ENCODE measurements at regions of chr10 and their contacts with region 1.

Region 1: GRCh38 chr10:24952707-24953645 is 570 bp upstream of the PRTFDC1 start:
- DNase-seq: peak; percentile 59 to 60
- H3K4me3 ChIP-seq: peak overlapping the region; percentile 52 to 66
- H3K27ac ChIP-seq: peak overlapping the region; percentile 92 to 95
- H3K4me1 ChIP-seq: no peaks in the 10 kb centered on the region
- H3K27me3 ChIP-seq: no peaks in the 10 kb centered on the region
- CTCF ChIP-seq: peak in 1 of 4 experiments; percentile 41
- POLR2A ChIP-seq: peak in 1 of 2 donors; percentile 19

Region 2: DNA sequence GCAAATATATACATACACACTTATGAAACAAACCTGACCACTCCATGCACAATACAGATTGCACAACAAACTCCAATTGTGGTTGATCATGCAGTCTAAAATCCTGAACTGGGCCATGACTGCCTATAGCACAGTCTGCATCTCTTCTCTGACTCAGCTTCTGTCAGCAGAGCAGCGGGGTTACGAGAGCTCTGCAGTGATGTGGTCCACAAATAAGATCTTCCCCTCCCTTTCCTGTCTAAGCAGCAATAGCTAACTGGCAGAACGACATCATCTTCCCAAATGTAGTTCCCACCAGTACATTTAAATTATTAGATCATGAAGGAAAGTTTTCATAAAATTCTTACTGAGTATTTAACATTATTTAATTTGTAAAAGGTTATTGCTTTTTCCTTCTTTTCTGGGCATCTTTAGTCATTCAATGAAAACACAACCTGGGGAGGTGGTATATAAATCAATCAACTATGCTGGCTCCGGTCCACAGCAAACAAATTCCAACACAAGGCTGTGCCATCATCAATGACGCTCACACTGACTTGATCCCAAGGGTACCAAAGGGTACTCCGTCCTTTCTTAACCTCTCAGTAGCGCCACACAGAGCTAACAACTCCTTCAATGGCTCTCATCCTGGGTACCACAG is 246.4 kb before region 1 on chr10:
- intact Hi-C with region 1: no loop called
- DNase-seq: peak in 1 of 2 donors; percentile 33
- H3K4me3 ChIP-seq: no peak overlapping the region
- H3K27ac ChIP-seq: peak overlapping the region in 1 of 2 donors; percentile 8
- H3K4me1 ChIP-seq: peaks cover 0 to 7% of the 10 kb centered on the region in 2 donors
- H3K27me3 ChIP-seq: no peaks in the 10 kb centered on the region
- CTCF ChIP-seq: no peak
- POLR2A ChIP-seq: no peak

Region 3: GRCh38 chr10:24724381-24725228 is 228.4 kb before region 1 on chr10:
- intact Hi-C with region 1: loop called (anchors 10 kb)
- DNase-seq: peak; percentile 97 to 98
- H3K4me3 ChIP-seq: peak overlapping the region; percentile 56 to 62
- H3K27ac ChIP-seq: peak overlapping the region; percentile 97 to 98
- H3K4me1 ChIP-seq: no peaks in the 10 kb centered on the region
- H3K27me3 ChIP-seq: no peaks in the 10 kb centered on the region
- CTCF ChIP-seq: no peak
- POLR2A ChIP-seq: peak; percentile 94 to 98

Region 4: GRCh38 chr10:24744946-24745345 is 208.0 kb before region 1 on chr10:
- intact Hi-C with region 1: no loop called
- DNase-seq: no peak
- H3K4me3 ChIP-seq: no peak overlapping the region
- H3K27ac ChIP-seq: no peak overlapping the region
- H3K4me1 ChIP-seq: no peaks in the 10 kb centered on the region
- H3K27me3 ChIP-seq: no peaks in the 10 kb centered on the region
- CTCF ChIP-seq: no peak
- POLR2A ChIP-seq: no peak

Region 5: DNA sequence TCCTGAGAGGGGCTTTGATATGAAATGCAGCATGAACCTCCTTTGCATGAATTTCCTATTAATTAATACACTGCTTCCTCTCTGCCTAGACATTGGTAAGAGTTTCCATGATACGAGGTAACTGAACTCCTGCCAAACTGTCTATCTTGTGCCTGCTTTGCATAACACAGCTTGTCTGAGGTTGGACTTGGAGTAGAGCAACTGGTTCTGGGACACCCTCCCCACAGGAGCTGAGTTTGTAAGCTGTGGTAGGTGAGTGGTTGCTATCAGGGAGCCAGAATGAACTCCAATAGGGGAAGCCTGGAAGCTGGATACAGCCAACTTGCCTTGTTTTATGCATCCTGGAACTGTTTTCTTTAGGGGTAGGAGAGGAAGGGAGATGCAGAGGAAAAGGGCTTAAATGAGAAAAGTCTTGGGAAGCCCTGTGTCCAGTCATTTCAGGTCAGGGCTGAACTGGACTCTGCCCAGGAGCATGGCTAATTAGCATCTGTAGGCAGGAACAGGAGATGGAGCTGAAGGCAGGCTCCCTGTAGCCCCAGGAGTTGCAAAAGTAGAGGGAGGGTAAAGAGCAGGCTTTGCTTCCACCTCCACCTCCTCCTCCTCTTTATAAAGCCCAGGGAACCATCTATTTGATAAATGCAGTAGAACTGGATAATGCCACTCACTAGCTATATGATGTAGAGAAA is 148.6 kb after region 1 on chr10:
- intact Hi-C with region 1: no loop called
- DNase-seq: no peak
- H3K4me3 ChIP-seq: no peak overlapping the region
- H3K27ac ChIP-seq: no peak overlapping the region
- H3K4me1 ChIP-seq: no peaks in the 10 kb centered on the region
- H3K27me3 ChIP-seq: no peaks in the 10 kb centered on the region
- CTCF ChIP-seq: no peak
- POLR2A ChIP-seq: no peak

Region 6: GRCh38 chr10:25174461-25175230 is 221.7 kb after region 1 on chr10 and contains the start of gene GPR158:
- intact Hi-C with region 1: no loop called
- DNase-seq: peak; percentile 55
- H3K4me3 ChIP-seq: peak within 1 kb of the TSS; percentile 15 to 20
- H3K27ac ChIP-seq: no peak within 1 kb of the TSS
- H3K4me1 ChIP-seq: peaks cover 0 to 5% of the 10 kb centered on the region in 2 donors
- H3K27me3 ChIP-seq: peaks cover 4 to 32% of the 10 kb centered on the region in 2 donors
- CTCF ChIP-seq: no peak
- POLR2A ChIP-seq: no peak
- total RNA-seq, gene GPR158: 0.07 TPM in 1 of 4 donors, not detected in the others

Measured in uterus (tissue), 4 donors.